Calu3 (cell line): ENCODE measurements at regions of chr1 and their contacts with region 1.

Region 1: GRCh38 chr1:219088778-219089557 is 84.7 kb upstream of the LYPLAL1 start:
- DNase-seq: peak; percentile 84
- H3K4me3 Mint-ChIP-seq: peak overlapping the region; percentile 33
- H3K27ac Mint-ChIP-seq: peak overlapping the region; percentile 93
- H3K4me1 Mint-ChIP-seq: peaks cover 40% of the 10 kb centered on the region
- H3K27me3 Mint-ChIP-seq: no peaks in the 10 kb centered on the region
- CTCF ChIP-seq: no peak

Region 2: DNA sequence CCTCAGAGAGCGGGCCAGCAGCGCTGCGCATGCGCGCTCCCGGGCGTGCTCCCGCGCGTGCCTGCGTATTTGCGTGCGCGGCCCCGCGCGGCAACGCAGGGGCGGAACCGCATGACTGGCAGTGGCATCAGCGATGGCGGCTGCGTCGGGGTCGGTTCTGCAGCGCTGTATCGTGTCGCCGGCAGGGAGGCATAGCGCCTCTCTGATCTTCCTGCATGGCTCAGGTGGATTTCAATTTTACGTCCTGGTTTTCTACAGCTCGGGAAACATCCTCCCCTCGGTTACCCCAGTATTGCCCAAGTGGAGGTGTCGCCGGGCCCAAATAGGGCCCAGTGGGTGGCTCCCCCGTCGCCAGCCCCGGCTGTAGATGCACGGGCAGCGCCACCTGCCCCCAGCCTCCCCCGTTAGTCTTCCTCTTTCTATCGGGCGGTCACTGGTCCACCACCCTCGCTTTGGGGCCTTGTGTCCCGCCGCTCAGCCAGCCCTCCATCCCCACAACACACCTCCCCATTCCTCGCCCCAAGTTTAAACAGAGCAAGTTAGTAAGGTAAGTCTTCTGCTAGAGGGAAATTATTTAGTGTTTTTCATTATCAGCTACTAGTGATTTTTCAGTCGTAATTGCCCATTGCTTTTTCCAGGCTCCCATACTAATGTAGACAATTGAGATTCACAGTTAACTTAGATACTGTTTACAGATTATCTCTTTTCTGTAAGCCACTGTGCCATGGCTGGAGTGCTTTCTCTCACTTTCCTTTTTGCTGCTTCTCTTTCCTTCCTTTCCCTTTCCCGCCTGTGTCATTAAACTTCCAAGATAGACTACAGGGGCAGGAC is 85.0 kb after region 1 on chr1 and contains the start of gene LYPLAL1:
- CTCF ChIA-PET with region 1: no interaction called
- intact Hi-C with region 1: loop called (anchors 2 kb)
- DNase-seq: peak; percentile 93
- H3K4me3 Mint-ChIP-seq: peak within 1 kb of the TSS; percentile 80
- H3K27ac Mint-ChIP-seq: peak within 1 kb of the TSS; percentile 81
- H3K4me1 Mint-ChIP-seq: peaks cover 34% of the 10 kb centered on the region
- H3K27me3 Mint-ChIP-seq: no peaks in the 10 kb centered on the region
- CTCF ChIP-seq: no peak
- total RNA-seq, gene LYPLAL1: 50.0 and 57.6 TPM in 2 replicates